ENCODE measurements at regions of chr17 and their contacts with region 1.

Region 1: GRCh38 chr17:15220785-15221184 is 44.3 kb downstream of the PMP22 start:
- DNase-seq: no peak
- H3K4me3 ChIP-seq: no peak overlapping the region
- H3K27ac ChIP-seq: no peak overlapping the region
- H3K4me1 ChIP-seq: no peaks in the 10 kb centered on the region
- H3K27me3 ChIP-seq: peaks cover 10% of the 10 kb centered on the region
- CTCF ChIP-seq: no peak

Region 2: DNA sequence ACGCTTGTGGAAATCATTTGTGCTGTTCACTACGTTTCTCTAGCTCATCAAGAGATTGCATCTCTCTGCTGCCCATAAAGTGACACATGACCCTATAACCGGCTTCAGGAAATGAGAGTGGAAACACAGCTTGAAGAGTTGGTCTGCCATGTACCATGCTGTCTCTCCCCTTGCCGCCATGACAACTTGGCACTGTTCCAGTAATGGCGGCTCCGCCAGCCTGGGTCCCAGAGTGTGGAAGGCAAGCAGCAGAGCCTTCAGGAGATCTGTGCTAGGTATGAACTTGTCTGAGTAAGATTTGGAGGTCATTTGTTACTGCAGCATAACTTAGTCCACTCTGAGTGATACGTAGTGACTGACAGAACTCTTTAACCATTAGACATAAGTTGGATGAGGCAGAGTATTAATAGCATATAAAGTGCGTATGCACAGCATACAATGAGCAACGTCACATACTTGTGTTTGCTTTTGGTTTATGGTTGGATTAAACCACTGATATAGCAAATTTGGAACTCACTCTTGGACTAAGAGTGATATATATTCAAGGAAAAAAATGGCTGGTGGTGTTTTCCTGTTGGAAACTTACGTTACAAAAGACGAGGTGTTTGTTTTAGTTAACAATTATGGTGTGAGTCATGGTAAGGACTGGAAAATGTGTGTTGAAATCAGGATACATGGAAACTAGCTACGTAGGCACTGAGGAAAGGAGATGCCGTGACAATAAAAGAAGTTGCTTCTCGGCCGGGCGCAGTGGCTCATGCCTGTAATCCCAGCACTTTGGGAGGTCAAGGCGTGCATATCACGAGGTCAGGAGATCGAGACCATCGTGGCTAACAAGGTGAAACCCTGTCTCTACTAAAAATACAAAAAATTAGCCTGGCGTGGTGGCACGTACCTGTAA is 68.8 kb after region 1 on chr17:
- CTCF ChIA-PET with region 1: no interaction called
- POLR2A ChIA-PET with region 1: no interaction called
- intact Hi-C with region 1: no loop called
- DNase-seq: peak in 1 of 2 experiments; percentile 54
- H3K4me3 ChIP-seq: no peak overlapping the region
- H3K27ac ChIP-seq: no peak overlapping the region
- H3K4me1 ChIP-seq: no peaks in the 10 kb centered on the region
- H3K27me3 ChIP-seq: peaks cover 10% of the 10 kb centered on the region
- CTCF ChIP-seq: no peak

Region 3: GRCh38 chr17:15364615-15365014 is 143.8 kb after region 1 on chr17:
- CTCF ChIA-PET with region 1: no interaction called
- POLR2A ChIA-PET with region 1: no interaction called
- intact Hi-C with region 1: no loop called
- DNase-seq: no peak
- H3K4me3 ChIP-seq: no peak overlapping the region
- H3K27ac ChIP-seq: no peak overlapping the region
- H3K4me1 ChIP-seq: no peaks in the 10 kb centered on the region
- H3K27me3 ChIP-seq: peaks cover 26% of the 10 kb centered on the region
- CTCF ChIP-seq: no peak

Region 4: DNA sequence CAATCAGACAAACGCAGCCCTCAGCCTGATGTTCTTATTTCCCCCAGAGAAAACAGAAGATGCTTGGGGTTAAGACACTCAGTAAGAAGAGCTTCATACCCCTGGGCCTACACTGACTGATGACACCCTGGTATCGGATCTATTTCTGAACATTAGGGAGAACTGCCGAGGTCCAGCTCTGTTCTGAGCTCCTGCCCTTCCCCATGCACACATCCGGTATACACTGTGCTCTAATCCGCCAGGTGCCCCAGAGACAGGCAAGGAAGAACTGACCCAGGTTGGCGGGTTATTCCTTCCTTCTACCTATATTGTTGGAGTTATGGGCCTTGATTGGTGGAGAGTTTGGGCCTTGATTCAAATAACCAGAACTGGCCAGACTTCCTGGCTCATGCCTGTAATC is 178.7 kb after region 1 on chr17:
- CTCF ChIA-PET with region 1: interaction called, 14 read pairs
- POLR2A ChIA-PET with region 1: no interaction called
- intact Hi-C with region 1: no loop called
- DNase-seq: no peak
- H3K4me3 ChIP-seq: no peak overlapping the region
- H3K27ac ChIP-seq: no peak overlapping the region
- H3K4me1 ChIP-seq: no peaks in the 10 kb centered on the region
- H3K27me3 ChIP-seq: peaks cover 23% of the 10 kb centered on the region
- CTCF ChIP-seq: no peak